Sigmoid colon (tissue), 7 donors: ENCODE measurements at regions of chrX and their contacts with region 1.

Region 1: GRCh38 chrX:131783555-131784308 is 239.4 kb upstream of the STK26 start:
- DNase-seq: peak; percentile 90
- H3K4me3 ChIP-seq: peak overlapping the region in 1 of 4 donors; percentile 26
- H3K27ac ChIP-seq: peak overlapping the region in 1 of 4 donors; percentile 48
- H3K4me1 ChIP-seq: peaks cover 0 to 5% (median 0%) of the 10 kb centered on the region in 4 donors
- H3K27me3 ChIP-seq: no peaks in the 10 kb centered on the region
- CTCF ChIP-seq: peak in 1 of 4 experiments; percentile 26
- EP300 ChIP-seq: no peak
- POLR2A ChIP-seq: no peak

Region 2: DNA sequence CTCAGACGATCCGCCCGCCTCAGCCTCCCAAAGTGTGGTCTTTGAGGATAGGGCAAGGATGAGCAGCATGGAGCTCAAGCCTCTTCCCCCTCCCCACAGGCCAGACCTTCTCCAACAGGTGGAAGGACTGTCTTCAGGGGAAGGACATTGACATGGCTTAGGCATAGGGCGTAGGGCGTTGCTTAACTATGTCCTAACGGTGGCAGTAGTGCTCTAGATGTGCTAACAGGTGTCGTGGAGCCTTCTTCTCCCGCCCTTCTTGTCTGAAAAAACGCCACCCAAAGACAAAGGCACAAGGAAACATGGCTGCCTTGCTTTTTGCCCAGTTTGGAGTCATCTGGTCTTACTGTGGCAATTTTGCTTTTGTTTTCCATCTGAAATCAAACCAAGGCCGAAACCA is 20.1 kb before region 1 on chrX:
- intact Hi-C with region 1: loop called (anchors 2 kb)
- DNase-seq: peak; percentile 94
- H3K4me3 ChIP-seq: peak overlapping the region in 2 of 4 donors; percentile 14 to 44
- H3K27ac ChIP-seq: peak overlapping the region in 2 of 4 donors; percentile 16 to 71
- H3K4me1 ChIP-seq: peaks cover 0 to 3% (median 0%) of the 10 kb centered on the region in 4 donors
- H3K27me3 ChIP-seq: no peaks in the 10 kb centered on the region
- CTCF ChIP-seq: peak in 1 of 4 experiments; percentile 43
- EP300 ChIP-seq: no peak
- POLR2A ChIP-seq: no peak

Region 3: DNA sequence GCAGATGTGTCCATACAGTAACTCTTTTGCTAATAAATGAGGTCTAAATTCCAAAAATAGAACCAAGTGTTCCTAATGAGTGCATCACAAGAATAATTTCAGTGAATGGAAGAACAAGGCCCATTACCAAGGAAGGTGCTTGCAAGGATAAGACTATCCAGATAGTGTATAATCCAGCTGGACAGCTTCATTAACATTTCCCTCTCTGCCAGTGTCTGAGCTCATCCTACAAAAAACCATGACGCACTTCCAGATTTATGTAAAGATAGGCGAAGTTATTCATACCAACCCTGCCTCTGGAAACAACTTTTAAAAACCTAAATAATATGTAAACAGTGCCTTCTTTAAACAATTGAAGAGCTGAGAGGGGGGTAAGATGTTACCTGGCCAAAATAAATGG is 61.5 kb after region 1 on chrX:
- intact Hi-C with region 1: no loop called
- DNase-seq: no peak
- H3K4me3 ChIP-seq: no peak overlapping the region
- H3K27ac ChIP-seq: no peak overlapping the region
- H3K4me1 ChIP-seq: no peaks in the 10 kb centered on the region
- H3K27me3 ChIP-seq: no peaks in the 10 kb centered on the region
- CTCF ChIP-seq: no peak
- EP300 ChIP-seq: no peak
- POLR2A ChIP-seq: no peak